Activated CD4-positive, alpha-beta T cell treated with anti-CD3 and anti-CD28 coated beads for 36 hours (primary cell): ENCODE measurements at regions of chr1 and their contacts with region 1.

Region 1: DNA sequence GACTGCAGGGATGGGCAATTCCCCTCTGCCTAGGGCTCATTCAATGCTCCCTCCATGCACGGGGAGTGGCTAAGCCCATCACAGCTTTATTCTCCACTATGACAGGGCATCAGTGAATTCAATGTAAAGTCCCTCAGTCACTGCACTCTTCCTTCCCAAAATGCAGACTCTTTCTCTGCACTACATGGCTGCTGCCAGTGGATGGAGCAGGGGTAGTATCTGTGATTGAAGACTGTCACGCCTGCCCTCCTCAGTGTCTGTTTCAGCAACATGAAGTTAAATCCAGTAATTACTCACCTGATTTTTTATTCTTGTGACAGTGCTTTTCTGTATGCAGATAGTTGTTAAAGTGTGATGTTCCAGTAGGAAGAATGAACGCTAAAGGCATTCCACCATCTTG is 1323.2 kb downstream of the AMY1C start:
- DNase-seq: no peak
- ATAC-seq: no peak
- H3K4me3 Mint-ChIP-seq: no peak overlapping the region
- H3K27ac Mint-ChIP-seq: no peak overlapping the region
- H3K4me1 Mint-ChIP-seq: no peaks in the 10 kb centered on the region
- H3K27me3 Mint-ChIP-seq: no peaks in the 10 kb centered on the region

Region 2: DNA sequence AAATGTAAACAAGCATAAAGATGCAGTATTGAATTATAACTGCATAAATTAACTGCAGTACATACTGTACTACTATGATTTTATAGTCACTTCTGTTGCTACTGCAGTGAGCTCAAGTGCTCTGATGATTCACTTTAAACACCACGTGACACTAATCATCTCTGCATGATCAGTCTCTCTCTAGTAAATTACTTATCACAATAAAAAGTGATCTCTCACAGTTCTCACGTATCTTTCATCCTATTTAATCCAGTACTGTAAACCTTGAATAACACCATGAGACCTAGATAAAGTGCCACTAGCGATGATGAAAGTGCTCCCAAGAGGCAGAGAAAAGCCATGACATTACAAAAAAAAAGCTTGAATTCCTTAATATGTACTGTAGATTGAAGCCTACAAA is 81.1 kb before region 1 on chr1:
- CTCF ChIA-PET with region 1: no interaction called
- POLR2A ChIA-PET with region 1: no interaction called
- intact Hi-C with region 1: no loop called
- DNase-seq: no peak
- ATAC-seq: no peak
- H3K4me3 Mint-ChIP-seq: no peak overlapping the region
- H3K27ac Mint-ChIP-seq: no peak overlapping the region
- H3K4me1 Mint-ChIP-seq: no peaks in the 10 kb centered on the region
- H3K27me3 Mint-ChIP-seq: no peaks in the 10 kb centered on the region

Region 3: GRCh38 chr1:105005594-105006195 is 67.2 kb before region 1 on chr1:
- CTCF ChIA-PET with region 1: no interaction called
- POLR2A ChIA-PET with region 1: no interaction called
- intact Hi-C with region 1: loop called in 1 of 2 experiments (anchors 10 kb)
- DNase-seq: no peak
- ATAC-seq: no peak
- H3K4me3 Mint-ChIP-seq: no peak overlapping the region
- H3K27ac Mint-ChIP-seq: no peak overlapping the region
- H3K4me1 Mint-ChIP-seq: no peaks in the 10 kb centered on the region
- H3K27me3 Mint-ChIP-seq: no peaks in the 10 kb centered on the region

Region 4: GRCh38 chr1:105180789-105181188 is 107.9 kb after region 1 on chr1:
- CTCF ChIA-PET with region 1: no interaction called
- POLR2A ChIA-PET with region 1: no interaction called
- intact Hi-C with region 1: no loop called
- DNase-seq: no peak
- ATAC-seq: no peak
- H3K4me3 Mint-ChIP-seq: no peak overlapping the region
- H3K27ac Mint-ChIP-seq: no peak overlapping the region
- H3K4me1 Mint-ChIP-seq: no peaks in the 10 kb centered on the region
- H3K27me3 Mint-ChIP-seq: no peaks in the 10 kb centered on the region